ENCODE measurements at regions of chr15 and their contacts with region 1.

Region 1: DNA sequence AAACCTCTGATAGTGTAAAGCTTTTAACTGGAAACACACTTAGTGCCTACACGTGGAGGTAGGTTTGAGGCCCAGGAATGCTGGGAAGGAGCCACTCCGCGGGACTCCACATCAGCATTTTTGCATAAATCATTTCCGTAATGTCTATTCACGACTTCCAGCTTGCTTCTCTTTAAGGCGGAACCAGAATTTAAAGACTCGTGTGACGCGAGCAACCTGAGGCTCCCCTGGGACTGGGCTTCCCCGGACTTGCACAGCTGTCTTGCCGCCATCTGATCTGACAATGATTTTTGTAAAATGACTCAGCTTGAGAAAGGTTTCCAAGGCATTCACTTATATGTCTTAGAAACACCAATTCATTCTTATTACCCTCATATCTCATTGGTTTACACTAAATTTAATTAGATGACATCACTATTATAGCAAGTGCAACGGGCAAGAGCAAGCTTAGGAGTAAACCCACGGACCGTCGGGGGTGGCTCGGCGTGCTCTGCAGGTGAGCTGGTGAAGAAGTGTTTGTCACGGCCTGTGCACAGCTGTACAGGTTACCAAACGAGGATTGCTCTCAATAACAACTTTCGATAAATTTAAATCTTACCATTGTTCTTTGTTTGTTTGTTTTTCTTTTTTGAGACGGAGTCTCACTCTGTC is 95.2 kb downstream of the CHSY1 start:
- DNase-seq: peak; percentile 88
- ATAC-seq: peak; percentile 94
- H3K4me3 ChIP-seq: peak overlapping the region in 1 of 5 experiments; percentile 14
- H3K4me3 Mint-ChIP-seq: peak overlapping the region; percentile 20
- H3K27ac ChIP-seq: no peak overlapping the region
- H3K27ac Mint-ChIP-seq: no peak overlapping the region
- H3K4me1 ChIP-seq: peaks cover 4 to 16% of the 10 kb centered on the region in 2 donors
- H3K4me1 Mint-ChIP-seq: peaks cover 17% of the 10 kb centered on the region
- H3K27me3 ChIP-seq: no peaks in the 10 kb centered on the region
- H3K27me3 Mint-ChIP-seq: no peaks in the 10 kb centered on the region
- CTCF ChIP-seq: no peak

Region 2: GRCh38 chr15:101078682-101079323 is 77.8 kb before region 1 on chr15:
- CTCF ChIA-PET with region 1: no interaction called
- POLR2A ChIA-PET with region 1: no interaction called
- intact Hi-C with region 1: no loop called
- DNase-seq: no peak
- ATAC-seq: no peak
- H3K4me3 ChIP-seq: no peak overlapping the region
- H3K4me3 Mint-ChIP-seq: no peak overlapping the region
- H3K27ac ChIP-seq: no peak overlapping the region
- H3K27ac Mint-ChIP-seq: no peak overlapping the region
- H3K4me1 ChIP-seq: no peaks in the 10 kb centered on the region
- H3K4me1 Mint-ChIP-seq: no peaks in the 10 kb centered on the region
- H3K27me3 ChIP-seq: no peaks in the 10 kb centered on the region
- H3K27me3 Mint-ChIP-seq: no peaks in the 10 kb centered on the region
- CTCF ChIP-seq: no peak

Region 3: GRCh38 chr15:101127506-101128076 is 29.0 kb before region 1 on chr15:
- CTCF ChIA-PET with region 1: no interaction called
- POLR2A ChIA-PET with region 1: interaction called, 5 read pairs
- intact Hi-C with region 1: loop called (anchors 2 kb)
- DNase-seq: peak; percentile 76
- ATAC-seq: peak; percentile 80
- H3K4me3 ChIP-seq: peak overlapping the region in 3 of 5 experiments; percentile 23 to 49 (median 27)
- H3K4me3 Mint-ChIP-seq: peak overlapping the region; percentile 81
- H3K27ac ChIP-seq: peak overlapping the region; percentile 95 to 97
- H3K27ac Mint-ChIP-seq: peak overlapping the region; percentile 98
- H3K4me1 ChIP-seq: peaks cover 65 to 67% of the 10 kb centered on the region in 2 donors
- H3K4me1 Mint-ChIP-seq: peaks cover 69% of the 10 kb centered on the region
- H3K27me3 ChIP-seq: no peaks in the 10 kb centered on the region
- H3K27me3 Mint-ChIP-seq: no peaks in the 10 kb centered on the region
- CTCF ChIP-seq: no peak

Region 4: DNA sequence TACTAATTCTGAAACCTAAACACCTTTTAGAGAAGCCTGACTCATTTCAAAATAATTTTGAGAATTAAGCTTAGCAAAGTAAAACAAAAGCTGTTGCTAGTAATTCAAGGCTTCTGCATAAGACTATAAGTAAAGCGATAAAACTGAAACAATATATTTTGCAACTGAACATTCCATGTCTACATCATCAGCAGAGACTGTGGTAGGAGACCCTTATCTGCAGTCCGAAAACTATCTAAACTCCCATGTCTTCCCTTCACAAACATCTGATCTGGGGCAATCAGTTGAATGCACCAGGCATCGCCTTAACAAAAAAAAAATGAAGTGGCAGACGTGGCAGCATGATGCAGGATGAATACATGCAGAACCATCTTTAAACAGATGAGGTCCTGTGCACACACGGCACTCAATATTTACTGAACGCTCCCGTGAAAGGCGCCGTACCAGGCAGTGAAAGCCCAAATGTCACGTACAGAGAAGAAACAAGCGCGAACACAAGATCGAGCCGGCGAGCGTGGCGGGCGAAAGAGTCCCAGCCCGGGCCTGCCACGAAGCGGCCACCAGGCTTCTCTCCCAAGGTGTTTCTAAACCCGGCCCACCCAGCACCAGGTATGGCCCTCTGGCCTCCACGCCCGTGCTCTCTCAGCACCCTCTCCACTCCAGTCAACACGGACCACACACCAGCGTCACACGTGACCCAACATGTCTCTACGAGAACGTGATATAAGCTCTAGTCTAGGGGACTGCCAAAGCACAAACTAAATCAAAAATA is 32.2 kb after region 1 on chr15:
- CTCF ChIA-PET with region 1: no interaction called
- POLR2A ChIA-PET with region 1: no interaction called
- intact Hi-C with region 1: no loop called
- DNase-seq: no peak
- ATAC-seq: no peak
- H3K4me3 ChIP-seq: no peak overlapping the region
- H3K4me3 Mint-ChIP-seq: no peak overlapping the region
- H3K27ac ChIP-seq: no peak overlapping the region
- H3K27ac Mint-ChIP-seq: no peak overlapping the region
- H3K4me1 ChIP-seq: peaks cover 0 to 8% of the 10 kb centered on the region in 2 donors
- H3K4me1 Mint-ChIP-seq: peaks cover 38% of the 10 kb centered on the region
- H3K27me3 ChIP-seq: no peaks in the 10 kb centered on the region
- H3K27me3 Mint-ChIP-seq: no peaks in the 10 kb centered on the region
- CTCF ChIP-seq: no peak

Measured in B cell (primary cell).